A673 (cell line): ENCODE measurements at regions of chr12 and their contacts with region 1.

Region 1: DNA sequence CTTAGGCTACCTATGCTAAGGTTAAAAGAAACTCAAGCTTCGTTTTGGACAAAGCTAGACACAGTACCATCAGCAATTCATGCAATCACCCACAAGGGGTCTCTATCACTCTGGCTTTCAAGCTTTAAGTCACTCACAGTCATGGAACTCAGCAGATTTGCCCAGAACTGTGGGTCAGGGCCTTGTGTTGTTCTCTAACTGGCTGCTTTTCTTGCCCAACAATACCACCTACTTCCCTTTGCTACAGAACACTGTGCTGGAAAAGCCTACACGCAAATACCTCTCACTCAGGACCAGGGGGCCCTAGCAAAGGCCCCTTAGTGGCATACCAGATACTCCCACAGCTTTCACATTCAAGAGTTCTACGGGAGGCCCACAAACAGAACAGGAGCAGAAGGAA is 9.1 kb downstream of the NEMP1 start:
- DNase-seq: peak; percentile 86
- H3K4me3 ChIP-seq: no peak overlapping the region
- H3K27ac ChIP-seq: peak overlapping the region; percentile 21
- H3K4me1 ChIP-seq: peaks cover 11% of the 10 kb centered on the region
- H3K27me3 ChIP-seq: no peaks in the 10 kb centered on the region
- CTCF ChIP-seq: peak; percentile 87

Region 2: GRCh38 chr12:57037264-57037663 is 32.3 kb before region 1 on chr12:
- CTCF ChIA-PET with region 1: no interaction called
- POLR2A ChIA-PET with region 1: no interaction called
- intact Hi-C with region 1: no loop called
- DNase-seq: no peak
- H3K4me3 ChIP-seq: no peak overlapping the region
- H3K27ac ChIP-seq: no peak overlapping the region
- H3K4me1 ChIP-seq: no peaks in the 10 kb centered on the region
- H3K27me3 ChIP-seq: no peaks in the 10 kb centered on the region
- CTCF ChIP-seq: no peak

Region 3: DNA sequence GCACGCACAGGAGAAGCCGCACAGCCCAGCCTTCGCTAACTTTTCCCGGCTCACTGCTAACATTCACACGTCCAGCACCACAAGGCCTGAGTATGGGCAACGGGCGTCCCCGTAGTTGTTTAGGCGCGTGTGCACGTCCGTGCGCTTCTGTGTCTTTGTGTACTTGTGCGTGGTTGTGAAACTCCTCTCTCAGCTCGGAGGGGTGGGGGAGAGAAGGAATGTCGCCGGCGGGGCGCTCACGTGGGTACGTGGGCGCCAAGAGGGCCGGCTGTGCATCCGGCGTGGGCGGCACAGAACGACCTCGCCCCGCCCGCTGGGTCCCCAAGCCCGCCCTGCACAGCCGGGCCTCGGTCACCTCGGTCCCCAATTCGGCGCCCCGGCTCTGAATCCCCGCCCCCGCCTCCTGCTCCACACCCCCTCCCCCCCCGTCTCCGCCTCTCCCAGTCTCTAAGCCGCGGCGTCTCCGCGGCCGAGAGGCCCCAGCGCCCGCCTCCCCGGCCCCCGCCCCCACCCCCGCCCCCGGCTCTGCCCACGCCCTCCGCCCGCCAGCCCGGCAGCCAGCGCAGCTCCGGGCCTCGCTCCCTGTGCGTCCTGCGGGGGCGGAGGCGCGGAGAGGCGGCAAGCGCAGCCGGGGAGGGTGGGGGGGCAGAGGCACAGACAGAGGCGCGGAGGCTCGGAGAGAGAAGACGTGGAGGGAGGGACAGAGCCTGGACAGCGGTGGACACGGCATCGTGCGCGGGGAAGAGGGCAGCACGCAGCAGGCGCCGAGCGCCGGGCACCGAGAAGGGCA is 19.1 kb after region 1 on chr12 and contains the start of gene NAB2:
- CTCF ChIA-PET with region 1: interaction called, 23 read pairs
- POLR2A ChIA-PET with region 1: interaction called, 3 read pairs
- intact Hi-C with region 1: no loop called
- DNase-seq: peak; percentile 98
- H3K4me3 ChIP-seq: peak within 1 kb of the TSS; percentile 93
- H3K27ac ChIP-seq: peak within 1 kb of the TSS; percentile 100
- H3K4me1 ChIP-seq: peaks cover 51% of the 10 kb centered on the region
- H3K27me3 ChIP-seq: no peaks in the 10 kb centered on the region
- CTCF ChIP-seq: no peak
- total RNA-seq, gene NAB2: 58.0 and 61.8 TPM in 2 replicates

Region 4: GRCh38 chr12:57173089-57173488 is 103.6 kb after region 1 on chr12:
- CTCF ChIA-PET with region 1: interaction called, 4 read pairs
- POLR2A ChIA-PET with region 1: no interaction called
- intact Hi-C with region 1: loop called (anchors 5 kb)
- DNase-seq: peak; percentile 36
- H3K4me3 ChIP-seq: no peak overlapping the region
- H3K27ac ChIP-seq: no peak overlapping the region
- H3K4me1 ChIP-seq: no peaks in the 10 kb centered on the region
- H3K27me3 ChIP-seq: no peaks in the 10 kb centered on the region
- CTCF ChIP-seq: peak; percentile 68

Region 5: GRCh38 chr12:57674691-57675090 is 605.2 kb after region 1 on chr12:
- CTCF ChIA-PET with region 1: no interaction called
- POLR2A ChIA-PET with region 1: no interaction called
- intact Hi-C with region 1: no loop called
- DNase-seq: no peak
- H3K4me3 ChIP-seq: no peak overlapping the region
- H3K27ac ChIP-seq: no peak overlapping the region
- H3K4me1 ChIP-seq: no peaks in the 10 kb centered on the region
- H3K27me3 ChIP-seq: no peaks in the 10 kb centered on the region
- CTCF ChIP-seq: no peak